ENCODE measurements at regions of chr11 and their contacts with region 1.

Region 1: GRCh38 chr11:111932611-111932950 is 4.6 kb upstream of the DIXDC1 start:
- DNase-seq: no peak
- H3K4me3 Mint-ChIP-seq: peak overlapping the region; percentile 3
- H3K27ac Mint-ChIP-seq: peak overlapping the region; percentile 58
- H3K4me1 Mint-ChIP-seq: peaks cover 35% of the 10 kb centered on the region
- H3K27me3 Mint-ChIP-seq: no peaks in the 10 kb centered on the region

Region 2: GRCh38 chr11:111944651-111945051 is 12.1 kb after region 1 on chr11:
- intact Hi-C with region 1: loop called (anchors 1 kb)
- DNase-seq: no peak
- H3K4me3 Mint-ChIP-seq: peak overlapping the region; percentile 66
- H3K27ac Mint-ChIP-seq: peak overlapping the region; percentile 98
- H3K4me1 Mint-ChIP-seq: peaks cover 45% of the 10 kb centered on the region
- H3K27me3 Mint-ChIP-seq: no peaks in the 10 kb centered on the region

Region 3: GRCh38 chr11:111963931-111964340 is 31.4 kb after region 1 on chr11:
- intact Hi-C with region 1: loop called (anchors 1 kb)
- DNase-seq: no peak
- H3K4me3 Mint-ChIP-seq: no peak overlapping the region
- H3K27ac Mint-ChIP-seq: peak overlapping the region; percentile 61
- H3K4me1 Mint-ChIP-seq: peaks cover 4% of the 10 kb centered on the region
- H3K27me3 Mint-ChIP-seq: no peaks in the 10 kb centered on the region

Region 4: GRCh38 chr11:112024773-112025678 is 92.4 kb after region 1 on chr11 and contains the start of gene DLAT:
- intact Hi-C with region 1: loop called (anchors 1 kb)
- DNase-seq: peak; percentile 86
- H3K4me3 Mint-ChIP-seq: peak within 1 kb of the TSS; percentile 99
- H3K27ac Mint-ChIP-seq: peak within 1 kb of the TSS; percentile 99
- H3K4me1 Mint-ChIP-seq: peaks cover 13% of the 10 kb centered on the region
- H3K27me3 Mint-ChIP-seq: no peaks in the 10 kb centered on the region
- total RNA-seq, gene DLAT: 47.2 and 47.3 TPM in 2 replicates

Measured in activated T-helper 2 cell treated with anti-CD3 and anti-CD28 coated beads, Interferon-gamma antibody, Interleukin-2, Interleukin-4, amounts not matched to agents 10 μg/mL and 5 μg/mL and 100 μg/mL, durations not matched to agents 14 hours and 24 hours and 36 hours (primary cell).